ENCODE measurements at regions of chr17 and their contacts with region 1.

Region 1: GRCh38 chr17:46770818-46771560 is 47.5 kb downstream of the WNT3 start:
- DNase-seq: no peak
- ATAC-seq: peak; percentile 67
- H3K4me3 ChIP-seq: peak overlapping the region; percentile 50; the same call in 1 of the 2 replicates
- H3K27ac ChIP-seq: no peak overlapping the region
- H3K4me1 ChIP-seq: 0 out of 2 replicates have a peak, but pooled peaks cover 4% of the 10 kb centered on the region
- H3K27me3 ChIP-seq: peaks cover 10 to 14% of the 10 kb centered on the region in 2 experiments; a peak in 3 of 4 replicates
- CTCF ChIP-seq: no peak
- EP300 ChIP-seq: no peak
- POLR2A ChIP-seq: peak; percentile 36; the same call in 1 of the 2 replicates
- RAD21 ChIP-seq: no peak

Region 2: DNA sequence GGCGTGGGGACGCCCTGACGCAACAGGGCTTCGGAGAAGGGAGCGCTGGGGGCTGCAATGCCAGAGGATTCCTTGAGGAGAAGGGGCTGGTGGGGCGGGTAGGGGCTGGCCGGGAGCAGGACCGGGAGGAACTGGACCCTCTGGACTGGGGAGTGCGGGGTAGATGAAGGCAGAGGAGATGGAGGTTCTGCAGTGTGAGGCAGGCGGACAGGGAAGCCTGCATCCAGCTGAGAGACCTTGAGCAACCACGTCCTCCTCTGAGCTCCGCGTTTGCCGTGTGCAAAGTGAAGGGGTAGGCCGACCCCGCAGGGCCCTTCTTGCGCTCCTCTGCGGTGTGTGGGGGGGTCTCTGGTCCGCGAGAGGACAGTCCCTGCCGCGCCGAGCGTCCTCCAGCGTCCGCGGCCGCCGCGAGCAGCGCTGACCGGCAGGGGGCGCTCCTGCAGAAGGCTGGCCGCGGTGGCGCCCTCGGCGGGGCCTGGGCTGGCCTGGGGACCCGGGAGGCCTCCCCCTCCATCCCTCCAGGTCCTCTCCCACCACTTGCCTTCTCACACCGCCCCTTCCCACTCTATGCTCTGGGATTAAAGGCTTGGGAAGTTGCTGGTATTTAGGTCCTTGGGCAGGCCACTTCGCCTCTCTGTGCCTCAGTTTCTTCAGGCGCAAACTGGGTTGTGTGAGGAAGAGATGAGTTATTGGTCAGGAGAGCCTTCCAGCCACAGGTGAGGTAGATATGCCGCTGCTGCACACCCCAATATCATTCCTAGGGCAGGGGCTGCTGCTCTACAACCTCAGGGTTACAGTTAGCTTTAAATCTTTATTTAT is 70.8 kb after region 1 on chr17:
- CTCF ChIA-PET with region 1: no interaction called
- POLR2A ChIA-PET with region 1: no interaction called
- RAD21 ChIA-PET with region 1: no interaction called
- SMC1A ChIA-PET with region 1: no interaction called
- in situ Hi-C with region 1: no loop called
- intact Hi-C with region 1: loop called (anchors 10 kb)
- DNase-seq: no peak
- ATAC-seq: no peak
- H3K4me3 ChIP-seq: no peak overlapping the region
- H3K27ac ChIP-seq: no peak overlapping the region
- H3K4me1 ChIP-seq: no peaks in the 10 kb centered on the region
- H3K27me3 ChIP-seq: 0 out of 4 replicates have a peak, but pooled peaks cover 0 to 2% of the 10 kb centered on the region in 2 experiments
- CTCF ChIP-seq: peak; percentile 28 to 51 (median 36); a peak in 5 of 6 replicates
- EP300 ChIP-seq: no peak
- POLR2A ChIP-seq: no peak
- RAD21 ChIP-seq: no peak

Region 3: DNA sequence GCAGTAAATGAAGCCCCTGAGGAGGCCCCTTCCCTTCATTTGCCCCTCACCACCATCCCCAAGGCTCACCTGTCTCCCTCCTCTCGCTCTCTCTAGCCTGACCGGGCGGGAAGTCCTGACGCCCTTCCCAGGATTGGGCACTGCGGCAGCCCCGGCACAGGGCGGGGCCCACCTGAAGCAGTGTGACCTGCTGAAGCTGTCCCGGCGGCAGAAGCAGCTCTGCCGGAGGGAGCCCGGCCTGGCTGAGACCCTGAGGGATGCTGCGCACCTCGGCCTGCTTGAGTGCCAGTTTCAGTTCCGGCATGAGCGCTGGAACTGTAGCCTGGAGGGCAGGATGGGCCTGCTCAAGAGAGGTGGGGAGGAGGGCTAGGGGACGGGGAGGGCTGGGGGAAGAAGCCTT is 101.4 kb after region 1 on chr17:
- CTCF ChIA-PET with region 1: no interaction called
- POLR2A ChIA-PET with region 1: no interaction called
- RAD21 ChIA-PET with region 1: no interaction called
- SMC1A ChIA-PET with region 1: no interaction called
- in situ Hi-C with region 1: no loop called
- intact Hi-C with region 1: no loop called
- DNase-seq: no peak
- ATAC-seq: no peak
- H3K4me3 ChIP-seq: no peak overlapping the region
- H3K27ac ChIP-seq: no peak overlapping the region
- H3K4me1 ChIP-seq: no peaks in the 10 kb centered on the region
- H3K27me3 ChIP-seq: no peaks in the 10 kb centered on the region
- CTCF ChIP-seq: no peak
- EP300 ChIP-seq: no peak
- POLR2A ChIP-seq: no peak
- RAD21 ChIP-seq: no peak

Measured in GM12878 (cell line).